ENCODE measurements at regions of chr7 and their contacts with region 1.

Region 1: GRCh38 chr7:140456551-140457051 is 22.7 kb downstream of the MKRN1 start:
- DNase-seq: no peak
- H3K4me3 Mint-ChIP-seq: no peak overlapping the region
- H3K27ac Mint-ChIP-seq: peak overlapping the region; percentile 40
- H3K4me1 Mint-ChIP-seq: peaks cover 51% of the 10 kb centered on the region
- H3K27me3 Mint-ChIP-seq: no peaks in the 10 kb centered on the region

Region 2: GRCh38 chr7:140439359-140439758 is 17.2 kb before region 1 on chr7:
- CTCF ChIA-PET with region 1: interaction called, 10 read pairs
- POLR2A ChIA-PET with region 1: interaction called, 4 read pairs
- intact Hi-C with region 1: no loop called
- DNase-seq: no peak
- H3K4me3 Mint-ChIP-seq: no peak overlapping the region
- H3K27ac Mint-ChIP-seq: peak overlapping the region; percentile 88
- H3K4me1 Mint-ChIP-seq: peaks cover 13% of the 10 kb centered on the region
- H3K27me3 Mint-ChIP-seq: no peaks in the 10 kb centered on the region

Region 3: GRCh38 chr7:141630621-141631020 is 1174.0 kb after region 1 on chr7:
- CTCF ChIA-PET with region 1: no interaction called
- POLR2A ChIA-PET with region 1: no interaction called
- intact Hi-C with region 1: no loop called
- DNase-seq: no peak
- H3K4me3 Mint-ChIP-seq: no peak overlapping the region
- H3K27ac Mint-ChIP-seq: no peak overlapping the region
- H3K4me1 Mint-ChIP-seq: no peaks in the 10 kb centered on the region
- H3K27me3 Mint-ChIP-seq: no peaks in the 10 kb centered on the region

Measured in activated CD4-positive, alpha-beta memory T cell treated with anti-CD3 and anti-CD28 coated beads for 36 hours (primary cell).